Activated CD4-positive, alpha-beta memory T cell treated with anti-CD3 and anti-CD28 coated beads, Interleukin-2, amount 10 ng/mL, durations not matched to agents 7 days and 5 days (primary cell): ENCODE measurements at regions of chr5 and their contacts with region 1.

Region 1: DNA sequence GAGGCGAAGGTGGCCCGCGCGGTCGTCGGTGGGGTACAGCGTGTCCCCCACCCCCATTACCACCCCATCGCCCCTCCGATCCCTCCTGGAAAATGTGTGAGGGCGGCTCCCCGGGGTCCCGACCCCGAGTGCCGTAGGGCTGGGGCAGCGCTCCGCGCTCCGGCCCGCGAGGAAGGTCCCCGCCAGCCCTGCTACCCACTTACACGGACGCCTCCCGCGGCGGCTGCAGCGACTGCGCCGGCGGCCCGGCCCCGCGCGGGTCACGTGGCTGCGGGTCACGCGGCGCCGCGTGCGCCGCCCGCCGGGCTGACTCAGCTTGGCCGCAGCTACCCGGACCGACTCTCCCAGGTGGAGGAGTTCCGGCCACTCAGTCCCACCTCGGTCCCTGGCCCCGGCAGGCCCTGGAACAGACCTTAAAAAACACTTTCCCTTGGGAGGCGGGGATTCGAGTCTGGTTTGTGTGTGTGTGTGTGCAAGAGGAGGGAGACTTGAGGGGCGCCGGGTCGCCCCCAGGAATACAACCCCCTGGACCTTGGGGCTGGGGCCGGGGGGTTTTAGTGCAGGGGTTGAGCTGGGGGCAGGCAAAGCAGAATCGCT is at the start of gene GNPDA1:
- DNase-seq: peak; percentile 77
- H3K4me3 Mint-ChIP-seq: peak within 1 kb of the TSS; percentile 79
- H3K27ac Mint-ChIP-seq: peak within 1 kb of the TSS; percentile 94
- H3K4me1 Mint-ChIP-seq: peaks cover 64% of the 10 kb centered on the region
- H3K27me3 Mint-ChIP-seq: no peaks in the 10 kb centered on the region
- total RNA-seq, gene GNPDA1: 27.1 to 32.1 TPM

Region 2: GRCh38 chr5:141952020-141952419 is 60.9 kb before region 1 on chr5:
- CTCF ChIA-PET with region 1: no interaction called
- POLR2A ChIA-PET with region 1: no interaction called
- DNase-seq: no peak
- H3K4me3 Mint-ChIP-seq: no peak overlapping the region
- H3K27ac Mint-ChIP-seq: no peak overlapping the region
- H3K4me1 Mint-ChIP-seq: peaks cover 30% of the 10 kb centered on the region
- H3K27me3 Mint-ChIP-seq: no peaks in the 10 kb centered on the region

Region 3: GRCh38 chr5:141992349-141992963 is 20.4 kb before region 1 on chr5:
- CTCF ChIA-PET with region 1: interaction called, 92 read pairs
- POLR2A ChIA-PET with region 1: interaction called, 4 read pairs
- DNase-seq: peak; percentile 79
- H3K4me3 Mint-ChIP-seq: no peak overlapping the region
- H3K27ac Mint-ChIP-seq: no peak overlapping the region
- H3K4me1 Mint-ChIP-seq: peaks cover 2% of the 10 kb centered on the region
- H3K27me3 Mint-ChIP-seq: no peaks in the 10 kb centered on the region

Region 4: GRCh38 chr5:142000703-142001484 is 12.0 kb before region 1 on chr5:
- CTCF ChIA-PET with region 1: interaction called, 16 read pairs
- POLR2A ChIA-PET with region 1: interaction called, 15 read pairs
- DNase-seq: no peak
- H3K4me3 Mint-ChIP-seq: no peak overlapping the region
- H3K27ac Mint-ChIP-seq: no peak overlapping the region
- H3K4me1 Mint-ChIP-seq: peaks cover 11% of the 10 kb centered on the region
- H3K27me3 Mint-ChIP-seq: no peaks in the 10 kb centered on the region

Region 5: GRCh38 chr5:142024771-142025304 is 11.9 kb after region 1 on chr5:
- CTCF ChIA-PET with region 1: interaction called, 35 read pairs
- POLR2A ChIA-PET with region 1: interaction called, 44 read pairs
- DNase-seq: peak; percentile 89
- H3K4me3 Mint-ChIP-seq: peak overlapping the region; percentile 81
- H3K27ac Mint-ChIP-seq: peak overlapping the region; percentile 93
- H3K4me1 Mint-ChIP-seq: peaks cover 18% of the 10 kb centered on the region
- H3K27me3 Mint-ChIP-seq: peaks cover 2% of the 10 kb centered on the region

Region 6: DNA sequence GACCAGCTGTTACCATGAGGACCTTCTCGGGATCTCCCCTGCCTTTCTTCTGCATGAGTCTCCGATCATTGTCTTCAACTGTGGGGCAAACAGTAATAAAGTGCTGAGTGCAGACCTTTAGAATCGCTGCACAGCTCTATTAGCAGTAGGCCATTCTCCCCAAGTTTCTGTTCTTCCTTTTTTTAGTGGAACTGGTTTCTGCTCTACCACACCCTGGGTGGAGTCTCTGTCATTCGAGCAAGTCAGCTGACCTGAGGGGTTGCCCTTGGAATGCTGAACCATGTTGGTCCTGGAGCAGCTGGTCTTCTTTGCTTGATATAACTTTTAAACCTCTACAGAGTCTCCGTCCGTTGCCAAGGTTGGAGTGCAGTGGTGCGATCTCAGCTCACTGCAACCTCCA is 33.3 kb after region 1 on chr5:
- CTCF ChIA-PET with region 1: no interaction called
- POLR2A ChIA-PET with region 1: no interaction called
- DNase-seq: no peak
- H3K4me3 Mint-ChIP-seq: no peak overlapping the region
- H3K27ac Mint-ChIP-seq: no peak overlapping the region
- H3K4me1 Mint-ChIP-seq: no peaks in the 10 kb centered on the region
- H3K27me3 Mint-ChIP-seq: no peaks in the 10 kb centered on the region

Region 7: GRCh38 chr5:142095651-142096330 is 82.9 kb after region 1 on chr5:
- CTCF ChIA-PET with region 1: interaction called, 15 read pairs
- POLR2A ChIA-PET with region 1: interaction called, 20 read pairs
- DNase-seq: peak; percentile 87
- H3K4me3 Mint-ChIP-seq: peak overlapping the region; percentile 7
- H3K27ac Mint-ChIP-seq: peak overlapping the region; percentile 89
- H3K4me1 Mint-ChIP-seq: peaks cover 37% of the 10 kb centered on the region
- H3K27me3 Mint-ChIP-seq: no peaks in the 10 kb centered on the region

Region 8: DNA sequence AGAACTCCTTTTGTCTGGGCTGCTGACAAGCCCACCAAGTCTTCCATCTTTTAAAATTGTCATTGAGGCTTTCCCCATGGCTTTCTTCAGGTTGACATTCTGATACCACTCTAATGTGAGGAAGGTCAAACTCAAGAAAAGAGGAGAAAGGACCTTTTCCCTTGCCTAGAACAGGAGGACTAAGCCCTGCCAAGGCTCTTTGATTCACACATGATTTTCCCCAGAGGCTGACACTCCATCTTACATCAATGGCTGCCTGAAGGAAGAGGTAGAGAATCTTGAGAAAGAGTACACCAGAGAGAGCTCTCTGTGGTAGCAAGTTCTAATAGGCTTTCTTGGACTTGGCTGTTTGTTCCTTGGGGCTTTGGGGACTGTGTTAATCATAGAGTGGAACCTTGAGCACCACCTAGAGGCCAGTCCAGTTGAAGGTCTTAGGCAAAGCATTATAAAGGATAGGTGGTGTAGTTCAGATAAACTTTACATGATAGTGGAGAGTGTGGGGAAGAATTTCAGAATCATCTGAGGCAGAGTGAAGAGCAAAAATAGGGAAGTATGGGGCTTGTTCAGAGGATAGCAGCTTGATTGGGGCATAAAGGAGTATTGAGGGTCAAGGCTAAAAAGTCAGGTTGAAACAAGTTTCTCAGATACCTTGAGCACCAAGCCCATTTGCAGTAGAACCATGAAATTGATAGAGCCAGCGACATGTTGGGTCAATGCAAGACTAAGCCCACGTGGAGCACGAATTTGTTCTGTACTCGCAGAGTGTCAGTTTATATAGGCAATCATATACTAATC is 132.4 kb after region 1 on chr5:
- CTCF ChIA-PET with region 1: interaction called, 180 read pairs
- POLR2A ChIA-PET with region 1: interaction called, 13 read pairs
- DNase-seq: peak; percentile 69
- H3K4me3 Mint-ChIP-seq: no peak overlapping the region
- H3K27ac Mint-ChIP-seq: no peak overlapping the region
- H3K4me1 Mint-ChIP-seq: no peaks in the 10 kb centered on the region
- H3K27me3 Mint-ChIP-seq: no peaks in the 10 kb centered on the region